ENCODE measurements at regions of chr5 and their contacts with region 1.

Region 1: GRCh38 chr5:175657593-175658271 is at the start of gene HRH2:
- DNase-seq: no peak
- ATAC-seq: peak; percentile 62
- H3K4me3 ChIP-seq: peak within 1 kb of the TSS; percentile 23 to 33
- H3K27ac ChIP-seq: no peak within 1 kb of the TSS
- H3K4me1 ChIP-seq: no peaks in the 10 kb centered on the region
- H3K27me3 ChIP-seq: peaks cover 9% of the 10 kb centered on the region
- CTCF ChIP-seq: no peak
- total RNA-seq, gene HRH2: 0.33 TPM

Region 2: DNA sequence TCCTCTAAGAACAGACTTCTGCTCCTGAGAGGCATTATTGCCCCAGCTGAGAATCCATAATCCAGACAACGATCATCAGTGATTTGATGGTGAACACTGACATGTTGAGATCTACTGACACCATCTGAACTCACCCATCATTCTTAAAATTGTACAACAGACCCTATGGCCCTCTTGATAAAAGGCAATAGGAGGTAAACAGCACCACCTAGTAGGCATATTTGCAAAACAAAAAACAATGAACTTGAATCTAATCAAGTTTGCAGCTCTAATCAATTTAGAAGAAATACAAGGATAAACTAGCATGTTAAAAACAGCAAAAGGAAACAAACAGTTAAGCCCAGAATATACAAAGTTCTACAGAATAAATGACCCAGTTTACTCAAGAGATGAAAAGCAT is 89.8 kb before region 1 on chr5:
- CTCF ChIA-PET with region 1: no interaction called
- POLR2A ChIA-PET with region 1: no interaction called
- in situ Hi-C with region 1: no loop called
- intact Hi-C with region 1: loop called (anchors 10 kb)
- DNase-seq: no peak
- ATAC-seq: no peak
- H3K4me3 ChIP-seq: no peak overlapping the region
- H3K27ac ChIP-seq: no peak overlapping the region
- H3K4me1 ChIP-seq: no peaks in the 10 kb centered on the region
- H3K27me3 ChIP-seq: peaks cover 26% of the 10 kb centered on the region
- CTCF ChIP-seq: no peak

Region 3: DNA sequence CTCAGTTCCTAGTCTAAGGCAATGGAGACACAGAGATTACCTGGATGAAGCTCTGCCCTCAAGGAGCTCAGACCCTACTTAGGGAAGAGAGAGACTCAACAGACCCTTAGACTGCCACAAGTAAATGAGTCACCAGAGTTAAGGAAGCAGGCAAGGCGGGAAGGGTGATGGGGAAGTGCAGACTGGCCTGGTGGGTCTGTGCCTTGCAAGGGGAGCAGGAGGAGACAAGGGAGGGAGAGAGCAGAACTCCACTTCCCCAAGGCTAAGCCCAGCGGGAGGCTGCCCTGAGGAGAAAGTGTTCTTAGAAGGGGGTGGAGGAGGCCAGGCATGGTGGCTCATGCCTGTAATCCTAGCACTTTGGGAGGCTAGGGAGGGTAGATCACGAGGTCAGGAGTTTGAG is 83.8 kb after region 1 on chr5:
- CTCF ChIA-PET with region 1: interaction called, 13 read pairs
- POLR2A ChIA-PET with region 1: no interaction called
- in situ Hi-C with region 1: no loop called
- intact Hi-C with region 1: no loop called
- DNase-seq: no peak
- ATAC-seq: no peak
- H3K4me3 ChIP-seq: no peak overlapping the region
- H3K27ac ChIP-seq: no peak overlapping the region
- H3K4me1 ChIP-seq: no peaks in the 10 kb centered on the region
- H3K27me3 ChIP-seq: peaks cover 8% of the 10 kb centered on the region
- CTCF ChIP-seq: no peak

Measured in Panc1 (cell line).